ENCODE measurements at regions of chr1 and their contacts with region 1.

Region 1: GRCh38 chr1:56525489-56526041 is 53.8 kb downstream of the PLPP3 start:
- DNase-seq: peak; percentile 79
- ATAC-seq: peak; percentile 90
- H3K4me3 ChIP-seq: no peak overlapping the region
- H3K27ac ChIP-seq: peak overlapping the region; percentile 53; the same call in 1 of the 2 replicates
- H3K4me1 ChIP-seq: peaks cover 42% of the 10 kb centered on the region
- H3K27me3 ChIP-seq: no peaks in the 10 kb centered on the region
- CTCF ChIP-seq: no peak
- EP300 ChIP-seq: peak; percentile 79 to 92
- POLR2A ChIP-seq: no peak
- RAD21 ChIP-seq: no peak

Region 2: GRCh38 chr1:56045477-56045876 is 480.1 kb before region 1 on chr1:
- CTCF ChIA-PET with region 1: no interaction called
- POLR2A ChIA-PET with region 1: no interaction called
- RAD21 ChIA-PET with region 1: no interaction called
- SMC1A ChIA-PET with region 1: no interaction called
- in situ Hi-C with region 1: no loop called
- intact Hi-C with region 1: loop called (anchors 5 kb)
- DNase-seq: no peak
- ATAC-seq: peak; percentile 93
- H3K4me3 ChIP-seq: no peak overlapping the region
- H3K27ac ChIP-seq: no peak overlapping the region
- H3K4me1 ChIP-seq: peaks cover 8% of the 10 kb centered on the region
- H3K27me3 ChIP-seq: no peaks in the 10 kb centered on the region
- CTCF ChIP-seq: no peak
- EP300 ChIP-seq: no peak
- POLR2A ChIP-seq: no peak
- RAD21 ChIP-seq: no peak

Region 3: GRCh38 chr1:56469640-56470371 is 55.8 kb before region 1 on chr1:
- CTCF ChIA-PET with region 1: interaction called, 4 read pairs
- POLR2A ChIA-PET with region 1: interaction called, 7 read pairs
- RAD21 ChIA-PET with region 1: interaction called, 17 read pairs
- SMC1A ChIA-PET with region 1: interaction called, 9 read pairs
- in situ Hi-C with region 1: no loop called
- intact Hi-C with region 1: loop called (anchors 2 kb)
- DNase-seq: no peak
- ATAC-seq: peak; percentile 58
- H3K4me3 ChIP-seq: no peak overlapping the region
- H3K27ac ChIP-seq: no peak overlapping the region
- H3K4me1 ChIP-seq: peaks cover 8% of the 10 kb centered on the region; the same call in 1 of the 2 replicates
- H3K27me3 ChIP-seq: no peaks in the 10 kb centered on the region
- CTCF ChIP-seq: no peak
- EP300 ChIP-seq: no peak
- POLR2A ChIP-seq: no peak
- RAD21 ChIP-seq: no peak

Region 4: GRCh38 chr1:56562891-56563452 is 37.4 kb after region 1 on chr1:
- CTCF ChIA-PET with region 1: interaction called, 27 read pairs
- POLR2A ChIA-PET with region 1: interaction called, 6 read pairs
- RAD21 ChIA-PET with region 1: interaction called, 174 read pairs
- SMC1A ChIA-PET with region 1: interaction called, 342 read pairs
- in situ Hi-C with region 1: no loop called
- intact Hi-C with region 1: loop called (anchors 2 kb)
- DNase-seq: no peak
- ATAC-seq: no peak
- H3K4me3 ChIP-seq: no peak overlapping the region
- H3K27ac ChIP-seq: no peak overlapping the region
- H3K4me1 ChIP-seq: no peaks in the 10 kb centered on the region; the same call in 1 of the 2 replicates
- H3K27me3 ChIP-seq: no peaks in the 10 kb centered on the region
- CTCF ChIP-seq: no peak
- EP300 ChIP-seq: no peak
- POLR2A ChIP-seq: no peak
- RAD21 ChIP-seq: no peak

Region 5: DNA sequence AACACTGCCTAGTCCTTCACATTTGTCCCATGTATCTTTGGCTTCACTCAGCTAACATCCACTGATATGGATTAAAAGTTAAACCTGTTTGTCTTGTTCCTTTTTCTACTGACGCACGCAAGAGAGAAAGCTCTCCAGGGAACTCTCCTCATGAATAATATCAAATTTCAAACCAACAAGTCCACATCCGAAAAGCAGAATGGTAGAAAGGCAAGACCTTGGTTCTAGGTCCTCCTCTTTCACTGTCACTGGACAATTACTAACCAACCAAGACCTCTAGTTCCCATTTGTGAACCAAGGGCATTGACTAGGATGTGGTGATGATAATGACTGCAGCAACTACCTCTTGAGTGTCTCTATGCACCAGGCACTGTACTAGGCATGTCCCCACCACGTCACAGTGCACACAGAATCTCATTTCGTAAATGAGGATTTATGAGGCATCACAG is 45.4 kb after region 1 on chr1:
- CTCF ChIA-PET with region 1: interaction called, 116 read pairs
- POLR2A ChIA-PET with region 1: interaction called, 9 read pairs
- RAD21 ChIA-PET with region 1: interaction called, 174 read pairs
- SMC1A ChIA-PET with region 1: interaction called, 342 read pairs
- in situ Hi-C with region 1: no loop called
- intact Hi-C with region 1: no loop called
- DNase-seq: no peak
- ATAC-seq: peak; percentile 33
- H3K4me3 ChIP-seq: no peak overlapping the region
- H3K27ac ChIP-seq: no peak overlapping the region
- H3K4me1 ChIP-seq: no peaks in the 10 kb centered on the region
- H3K27me3 ChIP-seq: peaks cover 0 to 3% of the 10 kb centered on the region in 2 experiments; a peak in 1 of 4 replicates
- CTCF ChIP-seq: no peak
- EP300 ChIP-seq: no peak
- POLR2A ChIP-seq: no peak
- RAD21 ChIP-seq: no peak